ENCODE measurements at regions of chr1 and their contacts with region 1.

Region 1: GRCh38 chr1:9867408-9868243 is 42.4 kb downstream of the CTNNBIP1 start:
- DNase-seq: peak; percentile 92
- CTCF ChIP-seq: peak; percentile 99

Region 2: DNA sequence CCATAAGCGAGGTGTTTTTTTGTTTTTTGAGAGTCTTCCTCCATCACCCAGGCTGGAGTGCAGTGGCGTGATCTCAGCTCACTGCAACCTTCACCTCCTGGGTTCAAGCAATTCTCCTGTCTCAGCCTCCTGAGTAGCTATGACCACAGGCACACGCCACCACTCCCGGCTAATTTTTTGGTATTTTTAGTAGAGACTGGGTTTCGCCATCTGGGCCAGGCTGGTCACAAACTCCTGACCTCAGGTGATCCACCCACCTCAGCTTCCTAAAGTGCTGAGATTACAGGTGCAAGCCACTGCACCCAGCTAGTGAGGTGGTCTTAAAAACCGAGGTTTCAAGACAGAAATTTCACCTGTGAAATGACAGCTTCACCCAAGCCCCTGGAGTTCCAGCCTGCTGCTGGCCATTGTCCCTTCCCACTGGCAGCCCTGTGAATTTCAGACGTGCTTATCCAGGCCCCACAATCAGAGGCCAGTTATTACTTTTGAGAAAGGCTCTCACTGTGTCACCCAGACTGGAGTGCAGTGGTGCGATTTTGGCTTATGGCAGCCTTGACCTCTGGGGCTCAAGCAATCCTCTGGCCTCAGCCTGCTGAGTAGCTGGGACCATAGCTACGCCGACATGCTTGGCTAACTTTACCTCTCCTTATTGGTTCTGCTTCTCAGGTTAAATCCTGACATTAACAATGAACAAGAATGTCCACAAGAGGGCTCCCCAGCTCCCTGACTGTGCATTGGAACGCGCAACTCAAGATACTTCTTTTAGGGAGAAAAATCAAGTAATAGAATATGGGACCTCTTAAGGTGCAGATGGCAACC is 1008.5 kb before region 1 on chr1:
- in situ Hi-C with region 1: no loop called
- DNase-seq: no peak
- CTCF ChIP-seq: peak; percentile 62

Region 3: DNA sequence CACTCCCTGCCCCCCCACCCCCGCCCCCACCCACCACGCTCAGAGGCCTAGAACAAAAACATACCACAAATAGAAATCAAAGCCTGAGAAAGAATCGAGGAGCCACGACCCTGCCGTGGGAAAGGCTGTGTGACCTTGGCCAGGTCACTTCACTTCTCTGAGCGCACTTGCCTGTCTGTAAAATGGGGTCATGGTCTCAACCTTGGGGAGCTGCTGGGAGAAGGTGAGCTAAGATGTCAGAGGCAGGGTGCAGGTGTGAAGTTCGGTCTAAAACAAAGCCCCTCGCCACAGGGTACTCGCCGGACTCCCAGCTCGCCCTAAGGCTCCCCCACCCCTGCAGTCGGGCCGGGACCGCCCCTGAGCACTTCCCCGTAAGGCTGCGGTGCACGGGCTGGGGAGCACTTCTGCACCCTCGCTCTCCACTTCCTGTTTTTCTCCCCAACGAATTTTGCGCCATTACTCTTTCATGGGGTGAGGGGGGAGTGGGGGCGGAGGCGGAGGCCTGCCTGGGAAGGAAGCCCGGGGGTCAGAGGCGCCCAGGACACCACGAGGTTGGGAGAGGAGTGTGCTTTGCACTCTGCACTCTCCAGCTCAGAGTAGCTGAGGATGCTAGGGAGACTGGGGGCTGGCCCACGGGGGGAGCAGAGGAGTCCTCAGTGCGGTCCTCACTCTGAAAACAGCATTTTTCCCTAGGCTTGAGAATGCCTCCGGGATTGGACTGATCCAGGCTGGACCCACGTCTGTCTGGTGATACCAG is 238.0 kb before region 1 on chr1:
- in situ Hi-C with region 1: loop called (anchors 25 kb)
- DNase-seq: peak; percentile 80
- CTCF ChIP-seq: no peak

Region 4: DNA sequence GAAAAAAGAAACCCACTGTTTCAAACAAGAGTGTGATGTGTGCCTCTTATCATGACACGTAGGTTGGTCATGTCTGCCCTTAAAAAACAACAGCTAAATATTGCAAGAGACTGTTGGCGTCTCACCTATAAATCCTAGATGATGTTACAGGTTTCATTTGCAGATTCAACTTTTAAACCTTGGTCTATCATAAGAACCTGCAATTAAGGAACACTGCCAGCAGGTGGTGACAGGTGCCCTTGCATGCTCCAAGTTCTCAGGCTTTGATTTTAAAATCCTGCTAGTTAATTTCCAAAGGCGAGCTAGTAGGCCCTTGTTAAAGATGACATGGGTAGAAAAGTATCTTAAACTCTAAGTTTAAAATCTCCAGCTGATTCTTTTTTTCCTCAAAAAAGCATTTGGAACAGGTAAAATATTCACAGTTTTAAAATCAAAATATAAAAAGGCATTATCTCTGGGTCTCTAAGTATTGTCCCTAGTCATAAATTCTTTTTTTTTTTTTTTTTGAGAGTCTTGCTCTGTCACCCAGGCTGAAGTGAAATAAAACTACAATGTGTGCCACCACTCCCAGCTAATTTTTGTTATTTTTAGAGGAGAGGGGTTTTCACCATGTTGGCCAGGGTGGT is 83.0 kb before region 1 on chr1:
- in situ Hi-C with region 1: loop called (anchors 5 kb)
- DNase-seq: peak; percentile 70
- CTCF ChIP-seq: peak; percentile 90